Posterior cingulate gyrus (tissue), 11 donors: ENCODE measurements at regions of chr3 and their contacts with region 1.

Region 1: DNA sequence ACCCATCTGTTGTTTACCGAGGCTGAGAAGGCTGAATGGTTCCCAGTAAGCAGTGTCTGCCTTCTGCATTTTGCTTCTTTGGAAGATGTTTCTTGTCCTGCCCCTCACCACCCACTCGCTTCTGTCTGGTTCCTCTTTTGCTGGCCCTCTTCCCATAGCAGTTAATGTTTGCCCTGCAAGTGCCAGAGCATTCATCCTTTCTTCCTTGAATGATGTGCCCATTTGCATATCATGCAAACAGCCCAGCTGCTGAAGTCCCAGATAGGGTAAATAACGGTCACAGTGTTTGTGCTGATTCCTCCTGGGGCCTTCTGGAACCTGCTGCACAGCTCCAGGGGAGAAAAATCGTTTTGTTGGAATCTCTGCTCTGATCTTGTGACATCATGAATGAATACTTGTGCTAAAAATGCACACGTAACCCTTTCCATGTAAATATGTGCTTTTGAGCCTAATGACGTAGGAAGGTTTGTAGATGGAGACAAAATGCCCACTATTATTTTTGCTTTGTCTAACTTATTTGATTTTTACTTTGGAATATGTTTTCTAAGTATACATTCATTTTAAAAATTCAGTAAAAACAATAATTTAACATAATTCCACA is 381.0 kb downstream of the SOX2 start:
- DNase-seq: peak in 9 of 10 donors; percentile 19 to 89 (median 47)

Region 2: DNA sequence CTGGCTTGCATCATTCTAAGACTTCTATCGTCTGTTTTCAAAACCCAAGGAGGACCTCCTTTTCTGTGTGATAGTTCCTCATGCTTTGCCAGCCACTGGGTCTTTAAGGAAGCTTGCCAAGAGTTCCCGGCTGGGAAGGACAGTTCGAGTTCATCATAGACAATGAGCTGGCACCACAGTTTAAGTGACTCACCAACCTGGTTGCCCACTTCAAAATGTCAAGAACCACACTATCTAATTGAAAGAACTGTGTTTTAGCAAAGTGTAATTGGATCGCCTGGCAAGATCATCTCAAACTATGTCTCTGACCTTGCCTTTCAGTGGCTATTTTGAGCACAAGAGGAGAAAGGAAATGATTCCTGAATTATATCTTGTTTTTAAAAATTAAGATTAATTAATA is 353.1 kb before region 1 on chr3:
- intact Hi-C with region 1: loop called (anchors 10 kb)
- DNase-seq: no peak

Region 3: GRCh38 chr3:182201456-182202168 is 108.8 kb after region 1 on chr3:
- intact Hi-C with region 1: no loop called
- DNase-seq: no peak

Region 4: GRCh38 chr3:182241766-182242488 is 149.2 kb after region 1 on chr3:
- intact Hi-C with region 1: loop called (anchors 10 kb)
- DNase-seq: peak; percentile 14 to 86 (median 42)

Region 5: GRCh38 chr3:182309120-182309519 is 216.4 kb after region 1 on chr3:
- intact Hi-C with region 1: no loop called
- DNase-seq: no peak

Region 6: GRCh38 chr3:183006396-183007002 is 913.7 kb after region 1 on chr3:
- intact Hi-C with region 1: no loop called
- DNase-seq: no peak